Right ventricle myocardium inferior (tissue), 1 donor: ENCODE measurements at regions of chr6 and their contacts with region 1.

Region 1: GRCh38 chr6:11575408-11576033 is 38.0 kb downstream of the TMEM170B start:
- DNase-seq: no peak
- ATAC-seq: peak; percentile 90

Region 2: DNA sequence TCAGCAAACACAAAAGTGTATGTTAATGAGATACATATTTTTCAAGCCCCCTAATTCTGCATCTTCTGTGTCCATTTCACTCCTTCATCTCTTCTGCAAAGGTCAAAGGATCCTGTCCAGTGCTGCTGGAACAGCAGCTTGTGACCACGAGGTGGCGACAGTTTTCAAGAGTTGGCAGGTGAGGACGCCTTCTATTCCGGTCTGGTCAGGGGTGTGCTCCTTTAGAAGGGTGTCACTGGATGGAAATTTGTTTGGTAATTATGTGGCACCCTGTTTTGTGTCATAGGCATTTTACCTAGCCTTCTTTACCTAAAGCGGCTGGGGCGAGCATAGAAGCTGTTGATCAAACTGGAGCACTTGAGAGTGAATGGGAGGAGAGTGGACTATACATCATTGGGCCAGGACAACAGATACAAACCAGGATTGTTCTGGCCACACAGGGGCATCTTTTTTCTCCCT is 431.1 kb before region 1 on chr6:
- intact Hi-C with region 1: loop called (anchors 2 kb)
- DNase-seq: peak; percentile 72
- ATAC-seq: peak; percentile 89